Adrenal gland (tissue), 19 donors: ENCODE measurements at regions of chr9 and their contacts with region 1.

Region 1: GRCh38 chr9:137114610-137115391 is at the start of gene DPP7:
- DNase-seq: peak; percentile 59 to 80 (median 75)
- H3K4me3 ChIP-seq: peak within 1 kb of the TSS in 3 of 4 donors; percentile 56 to 91 (median 61)
- H3K27ac ChIP-seq: peak within 1 kb of the TSS in 2 of 5 donors; percentile 22 to 35
- H3K4me1 ChIP-seq: peaks cover 5 to 11% of the 10 kb centered on the region in 2 donors
- H3K27me3 ChIP-seq: no peaks in the 10 kb centered on the region
- CTCF ChIP-seq: peak in 1 of 6 experiments; percentile 3
- POLR2A ChIP-seq: peak in 1 of 2 donors; percentile 58
- total RNA-seq, gene DPP7: 117 to 387 (median 234) TPM

Region 2: DNA sequence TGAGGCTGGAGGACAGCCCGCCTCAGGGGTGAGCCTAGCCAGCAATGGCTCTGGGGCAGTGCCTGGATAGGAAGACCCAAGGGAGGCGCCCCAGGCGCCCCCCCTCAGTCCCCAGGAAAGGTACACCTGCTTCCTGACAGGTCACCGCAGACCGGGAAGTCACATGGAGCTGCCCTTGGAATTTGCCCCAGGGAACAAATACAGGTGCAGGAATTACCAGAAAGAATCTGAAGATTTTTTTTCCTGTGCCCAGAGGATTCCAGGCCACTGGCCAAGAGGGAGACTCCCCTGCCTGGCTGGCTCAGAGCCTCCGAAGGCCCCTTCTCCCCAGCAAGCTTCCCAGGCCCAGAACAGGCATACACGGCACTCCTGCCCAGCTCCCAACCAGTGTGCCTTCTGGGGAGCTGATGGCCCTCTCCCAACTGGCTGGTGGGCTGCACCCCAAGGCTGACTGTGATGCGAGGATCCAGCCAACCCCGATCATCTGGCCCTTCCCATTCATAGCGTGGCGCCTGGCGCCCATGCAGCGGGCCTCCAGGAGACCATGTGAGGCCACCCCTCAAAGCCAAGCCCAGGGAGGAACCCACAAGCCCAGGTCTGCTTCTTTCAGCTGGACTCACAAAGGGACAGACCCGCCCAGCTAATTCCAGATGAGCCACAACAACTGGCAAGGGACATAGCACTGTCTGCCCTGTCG is 83.4 kb after region 1 on chr9:
- intact Hi-C with region 1: no loop called
- DNase-seq: no peak
- H3K4me3 ChIP-seq: no peak overlapping the region
- H3K27ac ChIP-seq: no peak overlapping the region
- H3K4me1 ChIP-seq: peaks cover 6 to 39% of the 10 kb centered on the region in 2 donors
- H3K27me3 ChIP-seq: no peaks in the 10 kb centered on the region
- CTCF ChIP-seq: no peak
- POLR2A ChIP-seq: no peak

Region 3: DNA sequence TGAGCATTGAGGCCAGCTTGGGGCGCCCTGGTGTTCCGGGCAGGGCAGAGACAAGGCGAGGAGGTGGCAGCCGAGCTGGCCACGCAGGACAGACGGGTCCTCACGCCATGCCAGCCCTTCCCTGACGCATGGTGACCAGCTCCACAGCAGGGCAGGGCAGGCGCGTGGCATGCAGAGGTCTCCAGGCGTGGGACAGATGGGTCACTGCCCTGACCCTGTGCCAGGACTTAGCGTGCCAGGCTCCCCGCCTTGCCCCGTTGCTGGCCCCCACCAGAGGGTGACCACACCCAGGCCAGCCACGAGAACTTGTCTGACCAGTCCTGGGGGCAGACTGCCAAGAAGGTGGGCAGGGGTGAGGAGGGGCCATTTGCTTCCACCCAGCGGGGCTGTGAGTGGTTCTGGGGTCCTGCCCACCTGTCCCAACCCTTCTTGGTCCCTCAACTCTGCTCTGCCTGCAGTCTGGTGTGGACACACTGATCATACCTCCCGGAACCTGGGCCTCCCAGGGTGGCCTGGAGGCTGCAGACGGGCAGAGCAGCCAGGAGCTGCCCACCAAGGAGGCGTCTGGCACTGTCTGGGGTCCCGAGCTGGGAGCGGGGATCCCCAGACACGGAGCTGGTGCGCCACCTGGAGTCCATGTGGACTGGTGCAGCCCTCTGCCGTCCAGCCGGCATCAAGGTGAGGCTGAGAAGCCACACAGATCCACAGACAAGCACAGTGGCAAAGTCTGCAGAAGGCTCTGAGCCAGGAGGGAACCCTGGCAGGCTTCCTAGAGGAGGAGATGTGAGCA is 112.5 kb after region 1 on chr9 and contains the start of gene RNF224:
- intact Hi-C with region 1: loop called (anchors 5 kb)
- DNase-seq: peak; percentile 75 to 89 (median 84)
- H3K4me3 ChIP-seq: no peak within 1 kb of the TSS
- H3K27ac ChIP-seq: no peak within 1 kb of the TSS
- H3K4me1 ChIP-seq: peaks cover 8 to 16% of the 10 kb centered on the region in 2 donors
- H3K27me3 ChIP-seq: peaks cover 36% of the 10 kb centered on the region
- CTCF ChIP-seq: peak; percentile 74 to 95 (median 90)
- POLR2A ChIP-seq: no peak
- total RNA-seq, gene RNF224: 0.06 TPM in 1 of 9 donors, not detected in the others

Region 4: GRCh38 chr9:137521405-137521985 is 406.7 kb after region 1 on chr9:
- intact Hi-C with region 1: no loop called
- DNase-seq: no peak
- H3K4me3 ChIP-seq: no peak overlapping the region
- H3K27ac ChIP-seq: no peak overlapping the region
- H3K4me1 ChIP-seq: peaks cover 7 to 10% of the 10 kb centered on the region in 2 donors
- H3K27me3 ChIP-seq: no peaks in the 10 kb centered on the region
- CTCF ChIP-seq: no peak
- POLR2A ChIP-seq: no peak